ENCODE measurements at regions of chr15 and their contacts with region 1.

Region 1: GRCh38 chr15:78979456-78980320 is 34.8 kb upstream of the CTSH start:
- DNase-seq: peak; percentile 66
- ATAC-seq: no peak
- H3K4me3 ChIP-seq: peak overlapping the region in 2 of 5 experiments; percentile 12 to 18
- H3K4me3 Mint-ChIP-seq: peak overlapping the region; percentile 83
- H3K27ac ChIP-seq: peak overlapping the region in 1 of 2 donors; percentile 5
- H3K27ac Mint-ChIP-seq: peak overlapping the region; percentile 96
- H3K4me1 ChIP-seq: peaks cover 38 to 46% of the 10 kb centered on the region in 2 donors
- H3K4me1 Mint-ChIP-seq: peaks cover 42% of the 10 kb centered on the region
- H3K27me3 ChIP-seq: peaks cover 0 to 2% (median 0%) of the 10 kb centered on the region in 4 experiments
- H3K27me3 Mint-ChIP-seq: peaks cover 2% of the 10 kb centered on the region
- CTCF ChIP-seq: peak; percentile 68

Region 2: DNA sequence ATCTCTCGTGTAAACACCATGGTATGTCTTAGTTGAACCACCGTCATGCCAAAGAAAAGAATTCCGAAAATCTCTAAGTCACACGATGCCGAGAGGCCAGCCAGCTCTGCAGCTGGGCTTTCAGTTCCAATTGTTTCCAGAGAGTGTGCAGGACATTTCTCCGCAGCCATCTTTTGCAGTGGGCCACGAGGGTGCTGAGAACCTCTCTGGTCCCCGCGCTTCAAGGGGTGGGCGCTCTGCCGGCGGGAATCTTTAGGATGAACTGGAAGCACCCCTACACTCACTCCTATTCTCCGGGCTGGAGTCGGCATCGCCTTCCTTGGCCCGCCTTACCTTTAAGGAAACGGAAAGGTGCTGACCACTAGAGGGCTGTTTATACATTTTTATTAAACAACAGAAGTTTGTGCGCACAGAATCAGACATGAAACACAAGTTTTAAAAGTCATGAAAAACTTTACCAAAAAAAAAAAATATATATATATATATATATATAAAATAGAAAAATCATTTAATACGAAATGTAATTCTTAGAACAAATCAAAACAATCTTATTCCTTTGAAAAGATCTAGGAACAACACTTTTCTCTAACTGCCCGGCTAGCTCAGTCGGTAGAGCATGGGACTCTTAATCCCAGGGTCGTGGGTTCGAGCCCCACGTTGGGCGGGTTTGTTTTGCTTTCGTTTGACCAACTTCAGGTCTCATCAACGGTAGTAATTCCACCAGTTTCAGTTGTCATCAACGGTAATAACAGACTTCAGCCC is 119.5 kb before region 1 on chr15:
- CTCF ChIA-PET with region 1: no interaction called
- POLR2A ChIA-PET with region 1: no interaction called
- intact Hi-C with region 1: no loop called
- DNase-seq: peak; percentile 82
- ATAC-seq: peak; percentile 81
- H3K4me3 ChIP-seq: peak overlapping the region; percentile 25 to 81 (median 53)
- H3K4me3 Mint-ChIP-seq: peak overlapping the region; percentile 81
- H3K27ac ChIP-seq: no peak overlapping the region
- H3K27ac Mint-ChIP-seq: peak overlapping the region; percentile 92
- H3K4me1 ChIP-seq: peaks cover 3 to 7% of the 10 kb centered on the region in 2 donors
- H3K4me1 Mint-ChIP-seq: peaks cover 7% of the 10 kb centered on the region
- H3K27me3 ChIP-seq: no peaks in the 10 kb centered on the region
- H3K27me3 Mint-ChIP-seq: no peaks in the 10 kb centered on the region
- CTCF ChIP-seq: peak; percentile 77

Region 3: DNA sequence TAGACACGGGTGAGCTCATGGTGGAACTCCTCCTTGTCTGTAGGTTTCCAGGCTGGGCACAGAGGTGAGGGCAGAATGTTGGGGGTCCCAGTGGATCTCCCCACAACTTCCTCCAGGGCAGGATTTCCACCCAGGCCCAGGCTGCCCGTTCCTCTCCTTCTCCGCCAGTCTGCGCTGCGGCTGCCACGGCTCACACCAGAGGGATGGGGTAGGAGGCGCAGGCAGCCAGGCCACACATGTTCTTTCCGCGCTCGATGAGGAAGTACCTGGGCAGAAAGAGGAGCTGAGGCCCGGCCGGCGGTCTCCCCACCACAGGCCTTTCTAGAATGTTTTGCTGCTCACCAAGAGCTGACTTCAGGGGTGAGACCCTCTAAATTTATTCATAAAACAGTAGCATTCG is 57.7 kb before region 1 on chr15:
- CTCF ChIA-PET with region 1: interaction called, 6 read pairs
- POLR2A ChIA-PET with region 1: no interaction called
- intact Hi-C with region 1: loop called (anchors 5 kb)
- DNase-seq: no peak
- ATAC-seq: no peak
- H3K4me3 ChIP-seq: no peak overlapping the region
- H3K4me3 Mint-ChIP-seq: no peak overlapping the region
- H3K27ac ChIP-seq: no peak overlapping the region
- H3K27ac Mint-ChIP-seq: peak overlapping the region; percentile 69
- H3K4me1 ChIP-seq: no peaks in the 10 kb centered on the region
- H3K4me1 Mint-ChIP-seq: peaks cover 6% of the 10 kb centered on the region
- H3K27me3 ChIP-seq: no peaks in the 10 kb centered on the region
- H3K27me3 Mint-ChIP-seq: no peaks in the 10 kb centered on the region
- CTCF ChIP-seq: no peak

Region 4: DNA sequence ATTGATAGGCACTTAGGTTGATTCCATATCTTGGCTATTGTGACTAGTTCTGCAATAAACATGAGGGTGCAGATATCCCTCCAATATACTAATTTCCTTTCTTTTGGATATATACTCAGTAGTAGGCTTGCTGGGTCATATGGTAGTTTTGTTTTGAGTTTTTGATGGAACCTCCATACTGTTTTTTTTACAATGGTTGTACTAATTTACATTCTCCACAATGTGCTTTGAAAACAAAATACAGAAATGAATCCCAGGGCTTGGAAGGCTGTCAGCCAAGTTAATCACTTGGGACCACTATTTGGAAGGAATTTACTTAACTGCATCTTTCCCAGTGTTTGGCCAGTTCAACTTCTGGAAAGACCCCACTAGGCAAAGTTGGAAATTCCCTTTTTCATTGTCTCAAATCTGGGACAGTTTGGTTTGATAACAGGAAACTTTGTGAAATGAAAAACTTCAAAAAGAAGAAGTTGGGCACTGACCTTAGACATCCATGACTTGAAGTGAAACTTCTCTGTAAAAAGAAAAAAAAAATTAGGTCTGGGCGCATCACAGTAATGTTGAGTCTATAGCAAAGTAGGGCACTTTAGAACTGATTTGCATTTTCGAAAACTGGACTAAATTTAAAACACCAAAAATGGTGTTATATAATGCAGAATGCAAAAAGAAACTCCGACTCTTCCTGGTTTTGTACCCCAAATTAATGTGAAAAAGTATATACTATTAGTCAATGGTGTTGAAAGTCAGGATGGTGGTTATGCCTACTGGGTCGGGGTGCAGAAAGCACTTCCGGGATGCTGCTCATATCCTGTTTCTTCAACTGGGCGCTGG is 40.8 kb before region 1 on chr15:
- CTCF ChIA-PET with region 1: interaction called, 31 read pairs
- POLR2A ChIA-PET with region 1: interaction called, 6 read pairs
- intact Hi-C with region 1: loop called (anchors 1 kb)
- DNase-seq: peak; percentile 86
- ATAC-seq: peak; percentile 82
- H3K4me3 ChIP-seq: peak overlapping the region in 3 of 5 experiments; percentile 34 to 42 (median 35)
- H3K4me3 Mint-ChIP-seq: peak overlapping the region; percentile 73
- H3K27ac ChIP-seq: peak overlapping the region; percentile 84 to 86
- H3K27ac Mint-ChIP-seq: peak overlapping the region; percentile 91
- H3K4me1 ChIP-seq: peaks cover 68 to 81% of the 10 kb centered on the region in 2 donors
- H3K4me1 Mint-ChIP-seq: peaks cover 65% of the 10 kb centered on the region
- H3K27me3 ChIP-seq: no peaks in the 10 kb centered on the region
- H3K27me3 Mint-ChIP-seq: no peaks in the 10 kb centered on the region
- CTCF ChIP-seq: no peak

Region 5: GRCh38 chr15:78944669-78945407 is 34.9 kb before region 1 on chr15 and contains the start of gene CTSH:
- CTCF ChIA-PET with region 1: interaction called, 31 read pairs
- POLR2A ChIA-PET with region 1: interaction called, 6 read pairs
- intact Hi-C with region 1: no loop called
- DNase-seq: peak; percentile 91
- ATAC-seq: peak; percentile 95
- H3K4me3 ChIP-seq: peak within 1 kb of the TSS; percentile 61 to 97 (median 94)
- H3K4me3 Mint-ChIP-seq: peak within 1 kb of the TSS; percentile 98
- H3K27ac ChIP-seq: peak within 1 kb of the TSS; percentile 77 to 83
- H3K27ac Mint-ChIP-seq: peak within 1 kb of the TSS; percentile 95
- H3K4me1 ChIP-seq: peaks cover 34 to 48% of the 10 kb centered on the region in 2 donors
- H3K4me1 Mint-ChIP-seq: peaks cover 32% of the 10 kb centered on the region
- H3K27me3 ChIP-seq: no peaks in the 10 kb centered on the region
- H3K27me3 Mint-ChIP-seq: no peaks in the 10 kb centered on the region
- CTCF ChIP-seq: no peak
- total RNA-seq, gene CTSH: 438 and 441 TPM in 2 replicates

Region 6: GRCh38 chr15:78968539-78969271 is 11.0 kb before region 1 on chr15:
- CTCF ChIA-PET with region 1: interaction called, 16 read pairs
- POLR2A ChIA-PET with region 1: no interaction called
- intact Hi-C with region 1: no loop called
- DNase-seq: no peak
- ATAC-seq: no peak
- H3K4me3 ChIP-seq: no peak overlapping the region
- H3K4me3 Mint-ChIP-seq: no peak overlapping the region
- H3K27ac ChIP-seq: no peak overlapping the region
- H3K27ac Mint-ChIP-seq: no peak overlapping the region
- H3K4me1 ChIP-seq: no peaks in the 10 kb centered on the region
- H3K4me1 Mint-ChIP-seq: peaks cover 3% of the 10 kb centered on the region
- H3K27me3 ChIP-seq: no peaks in the 10 kb centered on the region
- H3K27me3 Mint-ChIP-seq: no peaks in the 10 kb centered on the region
- CTCF ChIP-seq: no peak

Region 7: GRCh38 chr15:79004336-79004735 is 24.6 kb after region 1 on chr15:
- CTCF ChIA-PET with region 1: interaction called, 9 read pairs
- POLR2A ChIA-PET with region 1: interaction called, 16 read pairs
- intact Hi-C with region 1: loop called (anchors 1 kb)
- DNase-seq: peak; percentile 77
- ATAC-seq: peak; percentile 85
- H3K4me3 ChIP-seq: peak overlapping the region in 2 of 5 experiments; percentile 9 to 28
- H3K4me3 Mint-ChIP-seq: peak overlapping the region; percentile 81
- H3K27ac ChIP-seq: peak overlapping the region; percentile 58 to 60
- H3K27ac Mint-ChIP-seq: peak overlapping the region; percentile 95
- H3K4me1 ChIP-seq: peaks cover 30 to 45% of the 10 kb centered on the region in 2 donors
- H3K4me1 Mint-ChIP-seq: peaks cover 48% of the 10 kb centered on the region
- H3K27me3 ChIP-seq: no peaks in the 10 kb centered on the region
- H3K27me3 Mint-ChIP-seq: no peaks in the 10 kb centered on the region
- CTCF ChIP-seq: no peak